ENCODE measurements at regions of chr5 and their contacts with region 1.

Region 1: GRCh38 chr5:168579488-168580226 is 489 bp upstream of the PANK3 start:
- DNase-seq: peak; percentile 98
- H3K4me3 Mint-ChIP-seq: peak overlapping the region; percentile 84
- H3K27ac Mint-ChIP-seq: peak overlapping the region; percentile 97
- H3K4me1 Mint-ChIP-seq: peaks cover 31% of the 10 kb centered on the region
- H3K27me3 Mint-ChIP-seq: no peaks in the 10 kb centered on the region

Region 2: GRCh38 chr5:168227973-168228615 is 351.6 kb before region 1 on chr5:
- CTCF ChIA-PET with region 1: no interaction called
- intact Hi-C with region 1: loop called (anchors 1 kb)
- DNase-seq: peak; percentile 59
- H3K4me3 Mint-ChIP-seq: peak overlapping the region; percentile 38
- H3K27ac Mint-ChIP-seq: peak overlapping the region; percentile 87
- H3K4me1 Mint-ChIP-seq: peaks cover 17% of the 10 kb centered on the region
- H3K27me3 Mint-ChIP-seq: peaks cover 2% of the 10 kb centered on the region

Region 3: GRCh38 chr5:168291464-168291961 is 288.1 kb before region 1 on chr5 and contains the start of gene WWC1:
- CTCF ChIA-PET with region 1: no interaction called
- intact Hi-C with region 1: loop called (anchors 2 kb)
- DNase-seq: peak; percentile 78
- H3K4me3 Mint-ChIP-seq: peak within 1 kb of the TSS; percentile 64
- H3K27ac Mint-ChIP-seq: no peak within 1 kb of the TSS
- H3K4me1 Mint-ChIP-seq: peaks cover 22% of the 10 kb centered on the region
- H3K27me3 Mint-ChIP-seq: peaks cover 39% of the 10 kb centered on the region
- total RNA-seq, gene WWC1: 1.7 to 2.1 TPM

Region 4: GRCh38 chr5:168372356-168372946 is 207.2 kb before region 1 on chr5:
- CTCF ChIA-PET with region 1: no interaction called
- intact Hi-C with region 1: no loop called
- DNase-seq: no peak
- H3K4me3 Mint-ChIP-seq: no peak overlapping the region
- H3K27ac Mint-ChIP-seq: no peak overlapping the region
- H3K4me1 Mint-ChIP-seq: no peaks in the 10 kb centered on the region
- H3K27me3 Mint-ChIP-seq: no peaks in the 10 kb centered on the region

Region 5: GRCh38 chr5:168486136-168486879 is 93.3 kb before region 1 on chr5 and contains the start of gene RARS1:
- CTCF ChIA-PET with region 1: interaction called, 3 read pairs
- intact Hi-C with region 1: loop called (anchors 1 kb)
- DNase-seq: peak; percentile 94
- H3K4me3 Mint-ChIP-seq: peak within 1 kb of the TSS; percentile 98
- H3K27ac Mint-ChIP-seq: peak within 1 kb of the TSS; percentile 91
- H3K4me1 Mint-ChIP-seq: peaks cover 34% of the 10 kb centered on the region
- H3K27me3 Mint-ChIP-seq: no peaks in the 10 kb centered on the region
- total RNA-seq, gene RARS1: 80.9 to 84.0 TPM

Region 6: GRCh38 chr5:168592014-168592418 is 12.4 kb after region 1 on chr5:
- CTCF ChIA-PET with region 1: no interaction called
- intact Hi-C with region 1: no loop called
- DNase-seq: no peak
- H3K4me3 Mint-ChIP-seq: no peak overlapping the region
- H3K27ac Mint-ChIP-seq: no peak overlapping the region
- H3K4me1 Mint-ChIP-seq: no peaks in the 10 kb centered on the region
- H3K27me3 Mint-ChIP-seq: peaks cover 14% of the 10 kb centered on the region

Region 7: DNA sequence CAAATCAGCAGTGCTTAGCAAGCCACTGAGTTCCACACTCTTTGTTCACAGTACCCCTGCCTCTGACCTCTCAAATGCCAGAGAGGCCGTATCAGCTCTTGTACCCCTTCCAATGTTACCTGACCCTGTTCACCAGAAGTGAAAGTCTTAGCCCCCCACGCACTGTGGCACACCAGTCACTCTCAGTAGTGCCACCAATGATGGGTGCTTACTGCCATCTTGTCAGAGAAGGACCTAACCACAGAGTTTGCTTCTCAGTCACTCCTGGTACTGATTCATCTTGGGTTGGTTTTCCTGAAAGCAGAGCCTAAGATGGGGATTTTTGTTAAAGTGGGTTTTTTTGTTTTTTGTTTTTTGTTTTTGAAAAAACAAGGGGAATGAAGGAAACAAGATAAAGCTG is 28.3 kb after region 1 on chr5:
- CTCF ChIA-PET with region 1: no interaction called
- intact Hi-C with region 1: loop called (anchors 1 kb)
- DNase-seq: peak; percentile 25
- H3K4me3 Mint-ChIP-seq: no peak overlapping the region
- H3K27ac Mint-ChIP-seq: peak overlapping the region; percentile 30
- H3K4me1 Mint-ChIP-seq: peaks cover 12% of the 10 kb centered on the region
- H3K27me3 Mint-ChIP-seq: no peaks in the 10 kb centered on the region

Region 8: GRCh38 chr5:168679515-168679920 is 99.9 kb after region 1 on chr5:
- CTCF ChIA-PET with region 1: no interaction called
- intact Hi-C with region 1: loop called (anchors 1 kb)
- DNase-seq: peak; percentile 78
- H3K4me3 Mint-ChIP-seq: no peak overlapping the region
- H3K27ac Mint-ChIP-seq: no peak overlapping the region
- H3K4me1 Mint-ChIP-seq: peaks cover 12% of the 10 kb centered on the region
- H3K27me3 Mint-ChIP-seq: no peaks in the 10 kb centered on the region

Region 9: DNA sequence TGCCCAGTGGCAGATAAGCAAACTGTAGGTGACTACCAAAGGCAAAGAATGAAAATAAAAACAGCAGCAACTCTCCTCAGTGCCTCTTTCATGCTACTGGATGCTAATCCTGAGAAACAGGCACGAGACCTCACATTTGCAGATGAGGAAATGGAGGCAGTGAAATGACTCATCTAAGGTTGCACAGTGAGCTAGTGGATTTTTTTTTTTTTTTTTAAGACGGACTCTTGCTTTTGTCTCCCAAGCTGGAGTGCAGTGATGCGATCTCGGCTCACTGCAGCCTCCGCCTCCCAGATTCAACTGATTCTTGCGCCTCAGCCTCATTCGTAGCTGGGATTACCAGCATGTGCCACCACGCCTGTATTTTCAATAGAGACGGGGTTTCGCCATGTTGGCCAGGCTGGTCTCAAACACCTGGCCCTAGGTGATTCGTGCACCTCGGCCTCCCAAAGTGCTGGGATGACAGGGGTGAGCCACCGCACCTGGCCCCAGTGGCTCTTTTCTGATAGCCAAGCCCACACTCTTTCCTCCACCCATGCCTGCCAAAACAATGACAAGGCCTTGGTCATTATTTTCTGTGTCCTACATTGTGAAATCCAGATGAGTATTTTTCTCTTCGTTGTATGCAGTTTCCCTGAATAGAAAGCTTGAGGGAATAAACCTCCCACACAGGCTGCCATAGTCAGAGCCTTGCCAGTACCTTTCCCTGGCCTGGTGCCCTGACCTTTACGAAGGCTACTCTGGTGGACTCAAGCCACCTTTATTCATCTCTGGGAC is 1076.7 kb after region 1 on chr5:
- CTCF ChIA-PET with region 1: no interaction called
- intact Hi-C with region 1: loop called (anchors 5 kb)
- DNase-seq: peak; percentile 61
- H3K4me3 Mint-ChIP-seq: peak overlapping the region; percentile 29
- H3K27ac Mint-ChIP-seq: peak overlapping the region; percentile 77
- H3K4me1 Mint-ChIP-seq: peaks cover 61% of the 10 kb centered on the region
- H3K27me3 Mint-ChIP-seq: no peaks in the 10 kb centered on the region

Measured in activated naive CD4-positive, alpha-beta T cell treated with anti-CD3 and anti-CD28 coated beads for 36 hours (primary cell).